Activated naive CD4-positive, alpha-beta T cell treated with anti-CD3 and anti-CD28 coated beads for 36 hours (primary cell): ENCODE measurements at regions of chr2 and their contacts with region 1.

Region 1: DNA sequence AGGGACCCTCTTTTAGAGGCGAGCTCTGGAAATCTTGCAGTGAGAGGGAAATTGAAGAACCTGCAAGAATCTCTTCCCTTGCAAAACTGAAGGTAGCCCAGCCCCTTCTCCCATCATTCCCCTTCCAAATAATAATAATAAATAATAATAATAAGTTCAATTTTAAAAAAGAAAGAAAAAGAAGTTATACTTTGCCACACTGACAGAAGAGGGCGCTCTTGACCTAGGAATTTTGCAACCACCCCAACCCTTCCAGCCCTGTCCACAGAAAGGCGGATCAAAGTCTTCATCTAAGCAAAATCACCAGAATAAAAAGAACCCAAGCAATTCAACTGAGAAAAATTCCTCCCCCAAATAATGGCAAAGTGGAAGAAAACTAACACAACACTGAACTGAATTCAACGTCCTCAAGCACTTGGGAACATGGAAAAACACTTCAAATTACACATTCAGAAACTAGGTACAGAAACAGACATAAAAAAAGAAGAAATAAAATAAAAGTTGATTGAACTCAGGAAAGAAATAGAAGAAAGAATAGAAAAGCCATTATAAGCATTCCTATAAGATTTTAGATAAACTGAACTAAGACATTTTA is 98.9 kb upstream of the GLS start:
- DNase-seq: peak; percentile 77
- H3K4me3 Mint-ChIP-seq: no peak overlapping the region
- H3K27ac Mint-ChIP-seq: no peak overlapping the region
- H3K4me1 Mint-ChIP-seq: peaks cover 26% of the 10 kb centered on the region
- H3K27me3 Mint-ChIP-seq: no peaks in the 10 kb centered on the region

Region 2: GRCh38 chr2:189363559-189363958 is 1418.1 kb before region 1 on chr2:
- CTCF ChIA-PET with region 1: no interaction called
- intact Hi-C with region 1: no loop called
- DNase-seq: no peak
- H3K4me3 Mint-ChIP-seq: no peak overlapping the region
- H3K27ac Mint-ChIP-seq: no peak overlapping the region
- H3K4me1 Mint-ChIP-seq: peaks cover 13% of the 10 kb centered on the region
- H3K27me3 Mint-ChIP-seq: no peaks in the 10 kb centered on the region

Region 3: GRCh38 chr2:190763901-190764514 is 17.7 kb before region 1 on chr2:
- CTCF ChIA-PET with region 1: interaction called, 10 read pairs
- intact Hi-C with region 1: no loop called
- DNase-seq: peak; percentile 78
- H3K4me3 Mint-ChIP-seq: no peak overlapping the region
- H3K27ac Mint-ChIP-seq: peak overlapping the region; percentile 7
- H3K4me1 Mint-ChIP-seq: peaks cover 56% of the 10 kb centered on the region
- H3K27me3 Mint-ChIP-seq: no peaks in the 10 kb centered on the region

Region 4: DNA sequence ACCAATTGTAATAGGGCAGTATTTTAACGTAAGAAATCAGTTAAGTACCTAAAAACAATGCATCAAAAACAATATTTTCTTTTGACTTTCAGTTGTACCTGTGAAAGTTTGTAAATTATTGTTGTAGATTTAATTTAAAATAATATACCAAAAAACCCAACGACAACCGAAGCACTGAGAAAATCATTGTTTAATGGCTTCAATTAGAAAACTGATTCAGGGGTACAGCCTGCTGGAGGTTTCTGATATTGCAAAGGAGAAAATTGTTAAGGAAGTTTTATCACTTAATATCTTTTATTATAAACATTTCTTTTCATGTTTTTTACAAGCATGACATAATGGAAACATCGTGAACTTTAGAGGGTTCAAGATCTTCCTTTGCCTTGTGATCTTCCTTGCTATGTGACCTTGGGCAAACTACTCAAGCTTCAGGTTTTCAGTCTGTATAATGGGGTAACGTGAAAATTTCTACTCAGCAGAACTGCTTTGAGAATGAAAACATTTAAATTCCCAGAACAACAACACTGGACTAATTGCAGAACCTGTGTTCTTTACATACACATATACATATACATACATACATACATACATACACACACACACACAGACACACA is 22.6 kb after region 1 on chr2:
- CTCF ChIA-PET with region 1: interaction called, 28 read pairs
- intact Hi-C with region 1: loop called (anchors 1 kb)
- DNase-seq: no peak
- H3K4me3 Mint-ChIP-seq: no peak overlapping the region
- H3K27ac Mint-ChIP-seq: no peak overlapping the region
- H3K4me1 Mint-ChIP-seq: peaks cover 23% of the 10 kb centered on the region
- H3K27me3 Mint-ChIP-seq: no peaks in the 10 kb centered on the region

Region 5: DNA sequence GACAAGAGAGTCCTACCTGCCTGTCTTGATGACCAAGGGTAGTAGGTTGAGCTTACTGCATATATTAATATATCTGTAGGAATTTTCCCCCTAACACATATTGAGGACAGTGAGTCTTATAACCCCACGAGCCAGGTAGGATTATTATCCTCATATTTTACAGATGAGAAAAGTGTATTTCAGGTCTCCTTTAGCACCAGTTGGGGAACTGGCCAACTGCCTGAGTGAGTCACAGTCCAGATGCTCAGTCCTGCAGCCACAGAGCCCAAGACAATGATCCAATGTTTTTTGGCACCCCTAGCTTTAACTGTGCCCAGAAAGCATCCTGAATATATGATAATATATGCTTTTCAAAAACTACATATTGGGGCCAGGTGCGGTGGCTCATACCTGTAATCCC is 68.1 kb after region 1 on chr2:
- CTCF ChIA-PET with region 1: interaction called, 11 read pairs
- intact Hi-C with region 1: loop called (anchors 2 kb)
- DNase-seq: no peak
- H3K4me3 Mint-ChIP-seq: no peak overlapping the region
- H3K27ac Mint-ChIP-seq: no peak overlapping the region
- H3K4me1 Mint-ChIP-seq: peaks cover 19% of the 10 kb centered on the region
- H3K27me3 Mint-ChIP-seq: no peaks in the 10 kb centered on the region

Region 6: GRCh38 chr2:190947711-190948251 is 166.1 kb after region 1 on chr2:
- CTCF ChIA-PET with region 1: interaction called, 28 read pairs
- intact Hi-C with region 1: loop called (anchors 1 kb)
- DNase-seq: peak; percentile 42
- H3K4me3 Mint-ChIP-seq: no peak overlapping the region
- H3K27ac Mint-ChIP-seq: peak overlapping the region; percentile 32
- H3K4me1 Mint-ChIP-seq: peaks cover 7% of the 10 kb centered on the region
- H3K27me3 Mint-ChIP-seq: no peaks in the 10 kb centered on the region

Region 7: DNA sequence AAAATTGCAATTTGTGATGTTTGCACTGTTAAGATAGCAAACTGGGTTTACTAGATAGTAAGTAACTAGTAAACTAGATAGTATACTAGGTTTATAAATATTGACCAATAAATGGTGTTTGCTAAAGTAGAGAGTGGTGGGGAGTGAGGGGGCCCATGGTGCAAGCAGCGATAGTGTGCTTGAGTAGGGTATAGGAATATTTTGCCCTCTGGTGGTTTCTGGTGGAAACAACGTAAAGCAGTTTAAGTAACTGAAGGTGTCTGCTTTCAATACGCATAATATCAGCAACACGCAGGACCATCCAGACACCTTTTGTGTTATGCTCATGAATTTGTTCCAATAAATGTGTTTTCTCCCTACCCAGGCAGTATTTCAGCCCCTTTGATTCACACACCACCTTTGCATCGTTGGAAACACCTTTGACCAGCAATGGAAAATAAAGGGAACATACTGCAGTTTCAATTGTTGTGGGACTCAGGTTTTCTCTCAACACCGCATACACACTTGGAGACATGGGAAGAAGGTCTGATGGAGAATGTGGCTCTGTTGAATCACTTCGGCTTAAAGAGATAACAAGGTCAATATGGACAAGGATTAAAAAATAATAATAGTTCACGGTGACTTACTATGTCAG is 248.9 kb after region 1 on chr2:
- CTCF ChIA-PET with region 1: interaction called, 4 read pairs
- intact Hi-C with region 1: loop called (anchors 1 kb)
- DNase-seq: peak; percentile 59
- H3K4me3 Mint-ChIP-seq: no peak overlapping the region
- H3K27ac Mint-ChIP-seq: peak overlapping the region; percentile 44
- H3K4me1 Mint-ChIP-seq: peaks cover 48% of the 10 kb centered on the region
- H3K27me3 Mint-ChIP-seq: no peaks in the 10 kb centered on the region

Region 8: DNA sequence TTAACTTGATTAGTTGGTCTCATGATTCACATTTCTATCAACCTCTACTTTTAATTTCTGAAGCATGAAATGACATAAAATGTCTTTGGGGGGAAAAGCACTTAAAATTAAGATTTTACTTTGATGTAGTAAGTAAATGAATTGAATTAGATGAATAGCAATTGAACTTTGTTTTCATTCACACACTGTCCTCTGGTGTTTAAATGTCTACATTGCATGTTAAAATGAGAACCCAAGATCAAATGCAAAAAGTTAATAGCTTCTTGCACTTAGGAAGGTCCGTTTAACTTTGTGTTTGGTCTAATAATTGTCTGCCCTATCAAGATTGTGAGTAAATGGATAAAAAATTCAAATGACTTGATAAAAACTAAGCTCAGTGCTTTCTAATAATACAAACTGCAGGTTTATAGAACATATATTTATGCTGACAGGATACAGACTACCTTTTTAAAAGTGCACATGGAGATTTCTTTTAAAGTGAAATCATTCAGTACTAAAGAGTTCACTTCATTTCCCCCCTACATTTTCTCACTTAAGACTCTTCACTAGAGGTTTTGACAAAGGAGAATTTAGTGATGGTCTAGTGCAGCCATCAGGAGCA is 740.0 kb after region 1 on chr2:
- CTCF ChIA-PET with region 1: no interaction called
- intact Hi-C with region 1: loop called (anchors 5 kb)
- DNase-seq: no peak
- H3K4me3 Mint-ChIP-seq: no peak overlapping the region
- H3K27ac Mint-ChIP-seq: no peak overlapping the region
- H3K4me1 Mint-ChIP-seq: no peaks in the 10 kb centered on the region
- H3K27me3 Mint-ChIP-seq: no peaks in the 10 kb centered on the region